ENCODE measurements at regions of chr2 and their contacts with region 1.

Region 1: DNA sequence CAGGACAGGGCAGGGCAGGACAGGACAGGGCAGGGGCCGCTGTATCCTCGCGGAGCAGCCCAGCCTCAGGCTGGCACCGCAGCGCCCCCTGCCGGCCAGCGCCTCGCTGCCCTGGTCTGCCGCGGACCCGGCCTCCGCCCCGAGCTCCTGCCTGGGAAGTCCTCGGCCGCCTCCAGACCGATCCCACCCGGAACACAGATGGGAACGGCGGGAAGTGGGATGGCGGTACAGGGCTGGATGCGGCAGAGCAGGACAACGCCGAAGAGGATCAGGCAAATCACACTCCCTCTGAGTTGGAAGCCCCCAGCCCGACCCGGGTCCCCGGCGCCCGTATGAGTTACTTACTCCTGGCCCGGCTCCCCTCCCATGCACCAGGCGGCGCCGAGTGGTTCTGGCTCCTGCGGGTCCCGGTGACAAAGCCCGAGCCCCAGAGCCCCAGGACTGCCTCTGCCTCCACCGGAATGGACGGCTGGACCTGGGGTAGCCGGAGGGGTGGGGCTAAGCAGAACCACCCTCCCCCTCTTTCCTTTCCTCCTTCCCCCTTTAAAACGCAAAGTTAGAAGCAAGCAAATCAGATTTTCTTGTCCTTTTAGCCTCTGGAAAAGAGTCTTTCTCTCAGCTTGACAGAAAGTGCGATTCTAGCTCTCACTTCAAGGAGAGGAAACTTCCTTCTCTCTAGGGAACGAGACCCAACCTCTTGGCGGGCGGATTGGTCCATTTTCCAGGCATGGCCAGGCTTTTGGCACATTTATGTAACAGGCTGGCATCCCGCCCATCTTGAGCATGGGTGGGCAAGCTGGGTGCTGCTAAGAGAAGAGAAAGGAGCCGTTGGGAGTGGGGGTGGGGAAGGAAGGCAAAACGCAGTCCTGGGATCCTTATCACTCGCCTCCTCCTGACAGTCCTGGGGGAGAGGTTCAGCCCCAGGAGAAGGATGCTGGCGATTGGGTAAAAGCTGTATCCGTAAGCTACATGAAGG is at the start of gene TP53I3:
- DNase-seq: peak; percentile 97
- H3K4me3 ChIP-seq: peak within 1 kb of the TSS; percentile 66 to 72
- H3K27ac ChIP-seq: peak within 1 kb of the TSS; percentile 86 to 95
- H3K4me1 ChIP-seq: peaks cover 0 to 21% of the 10 kb centered on the region in 2 experiments; a peak in 2 of 4 replicates
- H3K27me3 ChIP-seq: no peaks in the 10 kb centered on the region
- CTCF ChIP-seq: peak; percentile 94
- EP300 ChIP-seq: peak in 1 of 2 experiments; percentile 32; a peak in 1 of 4 replicates
- RAD21 ChIP-seq: peak; percentile 66
- polyA plus RNA-seq, gene TP53I3: 110 and 116 TPM in 2 replicates

Region 2: DNA sequence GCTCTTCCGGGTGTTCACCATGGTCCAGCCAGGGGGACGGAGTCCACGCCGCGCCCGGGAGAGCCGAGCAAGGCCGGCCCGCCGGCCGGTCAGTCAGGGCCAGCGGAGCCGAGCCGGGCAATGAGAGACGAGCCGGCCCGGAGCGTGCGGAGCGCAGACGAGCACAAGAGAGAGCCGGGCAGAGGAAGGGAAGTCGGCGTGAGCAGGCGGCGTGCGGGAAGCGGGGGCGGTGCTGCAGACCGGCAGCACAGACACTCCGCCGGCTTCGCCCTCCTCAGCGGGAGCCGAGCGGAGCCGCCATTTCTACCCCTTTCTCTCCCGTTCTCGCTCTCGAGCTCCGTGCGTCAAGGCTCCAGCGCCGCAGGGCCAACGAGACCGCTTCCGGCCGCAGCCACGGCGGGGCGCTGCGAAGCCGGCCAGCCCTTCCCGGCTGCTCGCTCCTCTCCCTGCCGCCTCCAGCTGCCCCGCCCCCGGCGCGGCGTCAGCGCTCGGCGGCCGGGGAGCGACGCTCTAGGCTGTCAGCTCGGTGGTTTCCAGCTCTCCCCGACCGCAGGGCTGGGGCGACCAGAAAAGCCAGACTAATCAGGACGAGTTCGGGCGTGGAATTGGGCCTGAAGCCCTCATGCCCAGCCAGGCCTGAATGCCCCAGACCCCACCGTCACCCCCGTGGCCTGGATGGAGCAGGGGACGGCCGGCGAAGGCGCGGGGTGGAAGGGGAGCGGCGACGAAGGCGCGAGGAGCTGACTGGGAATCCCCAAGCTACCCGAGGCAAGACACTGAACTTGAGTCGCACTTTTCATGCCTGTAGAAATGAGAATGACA is 157.7 kb before region 1 on chr2 and contains the start of gene ATAD2B:
- CTCF ChIA-PET with region 1: interaction called, 75 read pairs
- POLR2A ChIA-PET with region 1: interaction called, 66 read pairs
- DNase-seq: peak; percentile 99
- H3K4me3 ChIP-seq: peak within 1 kb of the TSS; percentile 84 to 97
- H3K27ac ChIP-seq: peak within 1 kb of the TSS; percentile 94 to 95
- H3K4me1 ChIP-seq: peaks cover 8 to 13% of the 10 kb centered on the region in 2 experiments; a peak in 3 of 4 replicates
- H3K27me3 ChIP-seq: no peaks in the 10 kb centered on the region
- CTCF ChIP-seq: peak; percentile 87
- EP300 ChIP-seq: peak; percentile 23 to 58; a peak in 3 of 4 replicates
- RAD21 ChIP-seq: peak; percentile 84
- polyA plus RNA-seq, gene ATAD2B: 1.3 and 1.7 TPM in 2 replicates

Region 3: GRCh38 chr2:24046930-24047702 is 37.6 kb before region 1 on chr2 and contains the start of gene WDCP:
- CTCF ChIA-PET with region 1: interaction called, 21 read pairs
- POLR2A ChIA-PET with region 1: interaction called, 12 read pairs
- DNase-seq: peak; percentile 93
- H3K4me3 ChIP-seq: peak within 1 kb of the TSS; percentile 75 to 89
- H3K27ac ChIP-seq: peak within 1 kb of the TSS; percentile 54 to 74; a peak in 3 of 4 replicates
- H3K4me1 ChIP-seq: peaks cover 3 to 16% of the 10 kb centered on the region in 2 experiments; a peak in 2 of 4 replicates
- H3K27me3 ChIP-seq: no peaks in the 10 kb centered on the region
- CTCF ChIP-seq: no peak
- EP300 ChIP-seq: no peak
- RAD21 ChIP-seq: no peak
- polyA plus RNA-seq, gene WDCP: 7.1 and 11.9 TPM in 2 replicates

Region 4: DNA sequence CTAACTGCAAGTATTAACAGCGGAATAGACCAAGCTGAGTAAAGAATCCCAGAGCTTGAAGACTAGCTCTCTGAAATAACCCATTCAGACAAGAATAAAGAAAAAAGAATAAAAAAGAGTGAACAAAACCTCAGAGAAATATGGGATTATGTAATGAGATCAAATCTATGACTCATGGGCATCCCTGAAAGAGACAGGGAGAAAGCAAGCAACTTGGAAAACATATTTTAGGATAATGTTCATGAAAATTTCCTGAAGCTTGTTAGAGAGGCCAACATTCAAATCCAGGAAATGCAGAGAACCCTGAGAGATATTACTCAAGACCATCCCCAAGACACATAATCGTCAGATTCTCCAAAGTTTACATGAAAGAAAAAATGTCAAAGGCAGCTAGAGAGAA is 21.1 kb after region 1 on chr2:
- CTCF ChIA-PET with region 1: interaction called, 38 read pairs
- POLR2A ChIA-PET with region 1: interaction called, 6 read pairs
- DNase-seq: no peak
- H3K4me3 ChIP-seq: no peak overlapping the region
- H3K27ac ChIP-seq: no peak overlapping the region
- H3K4me1 ChIP-seq: peaks cover 0 to 11% of the 10 kb centered on the region in 2 experiments; a peak in 2 of 4 replicates
- H3K27me3 ChIP-seq: no peaks in the 10 kb centered on the region
- CTCF ChIP-seq: no peak
- EP300 ChIP-seq: no peak
- RAD21 ChIP-seq: no peak

Region 5: DNA sequence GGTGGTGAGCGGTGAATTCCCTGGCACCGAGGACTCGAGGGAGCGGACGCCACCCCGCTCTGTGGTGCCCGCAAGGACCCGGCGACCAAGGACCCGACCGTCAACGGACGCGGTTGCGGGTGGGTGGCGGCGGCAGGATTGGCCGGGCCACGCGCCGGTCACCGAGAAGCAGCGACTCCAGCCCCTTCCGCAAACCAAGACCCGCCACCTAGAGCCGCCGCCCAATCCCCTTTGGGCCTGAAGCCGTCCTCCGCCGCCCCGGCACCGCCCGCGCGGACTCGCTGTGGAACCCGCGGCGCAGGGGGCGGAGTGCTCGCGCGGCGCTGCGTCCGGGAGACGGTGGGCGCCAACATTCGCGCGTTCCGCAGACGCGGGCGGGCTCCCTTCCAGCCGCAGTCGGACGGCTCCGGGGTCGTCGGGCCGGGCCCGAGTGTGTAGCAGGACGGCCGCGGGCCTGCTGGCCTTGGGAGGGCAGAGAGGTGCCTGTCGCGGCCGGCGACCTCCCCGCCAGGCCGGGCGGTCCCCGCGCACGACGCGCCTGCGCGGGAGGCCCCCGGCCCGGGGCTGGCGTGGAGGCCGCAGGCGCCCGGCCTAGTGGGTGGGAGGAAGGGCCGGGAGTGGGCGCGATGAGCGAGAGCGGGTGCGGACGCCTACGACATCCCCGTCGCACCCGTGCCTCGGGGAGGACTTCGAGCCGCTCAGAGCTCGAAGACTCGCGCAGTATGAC is 38.7 kb after region 1 on chr2 and contains the starts of genes FAM228B and PFN4:
- CTCF ChIA-PET with region 1: interaction called, 31 read pairs
- POLR2A ChIA-PET with region 1: interaction called, 28 read pairs
- DNase-seq: peak; percentile 96
- H3K4me3 ChIP-seq: peak within 1 kb of the TSS; percentile 61 to 74
- H3K27ac ChIP-seq: peak within 1 kb of the TSS; percentile 82 to 91
- H3K4me1 ChIP-seq: peaks cover 5 to 17% of the 10 kb centered on the region in 2 experiments; a peak in 3 of 4 replicates
- H3K27me3 ChIP-seq: no peaks in the 10 kb centered on the region
- CTCF ChIP-seq: no peak
- EP300 ChIP-seq: no peak
- RAD21 ChIP-seq: no peak
- polyA plus RNA-seq, gene FAM228B: 5.3 and 6.8 TPM in 2 replicates
- polyA plus RNA-seq, gene PFN4: 0.54 and 0.61 TPM in 2 replicates

Region 6: GRCh38 chr2:24382363-24383073 is 297.8 kb after region 1 on chr2:
- CTCF ChIA-PET with region 1: interaction called, 26 read pairs
- POLR2A ChIA-PET with region 1: no interaction called
- DNase-seq: peak; percentile 88
- H3K4me3 ChIP-seq: no peak overlapping the region
- H3K27ac ChIP-seq: no peak overlapping the region
- H3K4me1 ChIP-seq: no peaks in the 10 kb centered on the region
- H3K27me3 ChIP-seq: no peaks in the 10 kb centered on the region
- CTCF ChIP-seq: peak; percentile 69
- EP300 ChIP-seq: no peak
- RAD21 ChIP-seq: peak; percentile 92